GM12878 (cell line): ENCODE measurements at regions of chr9 and their contacts with region 1.

Region 1: DNA sequence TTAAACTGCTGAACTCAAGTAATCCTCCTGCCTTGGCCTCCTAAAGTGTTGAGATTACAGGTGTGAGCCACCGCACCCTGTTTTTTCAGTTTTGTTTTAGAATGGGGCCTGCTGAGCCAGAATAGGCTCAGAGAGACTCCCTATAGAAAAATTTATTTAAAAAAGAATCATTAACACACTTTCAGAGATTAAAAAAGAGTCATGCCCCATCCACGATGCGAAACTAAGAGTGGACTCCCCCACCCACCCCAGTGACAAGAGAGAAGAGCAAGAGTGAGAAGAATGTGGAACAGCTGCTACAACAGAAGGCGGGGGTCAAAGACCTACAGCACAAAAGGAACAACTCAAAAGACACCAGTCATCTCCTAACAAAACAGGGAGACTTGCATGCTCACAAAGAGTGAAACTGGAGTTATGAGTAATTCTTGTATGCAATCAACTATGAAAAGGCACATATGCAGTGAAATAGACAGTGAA is 47.2 kb downstream of the GLDC start:
- DNase-seq: peak; percentile 92
- ATAC-seq: peak; percentile 99
- H3K4me3 ChIP-seq: no peak overlapping the region
- H3K27ac ChIP-seq: peak overlapping the region; percentile 63
- H3K4me1 ChIP-seq: peaks cover 10% of the 10 kb centered on the region; the same call in 1 of the 2 replicates
- H3K27me3 ChIP-seq: no peaks in the 10 kb centered on the region
- CTCF ChIP-seq: no peak
- EP300 ChIP-seq: peak; percentile 69 to 92; a peak in 3 of 4 replicates
- POLR2A ChIP-seq: no peak
- RAD21 ChIP-seq: peak; percentile 14; the same call in 1 of the 2 replicates

Region 2: GRCh38 chr9:6575324-6576034 is 22.8 kb before region 1 on chr9:
- CTCF ChIA-PET with region 1: interaction called, 5 read pairs
- POLR2A ChIA-PET with region 1: interaction called, 5 read pairs
- RAD21 ChIA-PET with region 1: interaction called, 6 read pairs
- SMC1A ChIA-PET with region 1: interaction called, 18 read pairs
- in situ Hi-C with region 1: no loop called
- intact Hi-C with region 1: no loop called
- DNase-seq: peak; percentile 53
- ATAC-seq: peak; percentile 95
- H3K4me3 ChIP-seq: no peak overlapping the region
- H3K27ac ChIP-seq: peak overlapping the region; percentile 4; the same call in 1 of the 2 replicates
- H3K4me1 ChIP-seq: peaks cover 18% of the 10 kb centered on the region
- H3K27me3 ChIP-seq: no peaks in the 10 kb centered on the region
- CTCF ChIP-seq: no peak
- EP300 ChIP-seq: no peak
- POLR2A ChIP-seq: no peak
- RAD21 ChIP-seq: no peak

Region 3: DNA sequence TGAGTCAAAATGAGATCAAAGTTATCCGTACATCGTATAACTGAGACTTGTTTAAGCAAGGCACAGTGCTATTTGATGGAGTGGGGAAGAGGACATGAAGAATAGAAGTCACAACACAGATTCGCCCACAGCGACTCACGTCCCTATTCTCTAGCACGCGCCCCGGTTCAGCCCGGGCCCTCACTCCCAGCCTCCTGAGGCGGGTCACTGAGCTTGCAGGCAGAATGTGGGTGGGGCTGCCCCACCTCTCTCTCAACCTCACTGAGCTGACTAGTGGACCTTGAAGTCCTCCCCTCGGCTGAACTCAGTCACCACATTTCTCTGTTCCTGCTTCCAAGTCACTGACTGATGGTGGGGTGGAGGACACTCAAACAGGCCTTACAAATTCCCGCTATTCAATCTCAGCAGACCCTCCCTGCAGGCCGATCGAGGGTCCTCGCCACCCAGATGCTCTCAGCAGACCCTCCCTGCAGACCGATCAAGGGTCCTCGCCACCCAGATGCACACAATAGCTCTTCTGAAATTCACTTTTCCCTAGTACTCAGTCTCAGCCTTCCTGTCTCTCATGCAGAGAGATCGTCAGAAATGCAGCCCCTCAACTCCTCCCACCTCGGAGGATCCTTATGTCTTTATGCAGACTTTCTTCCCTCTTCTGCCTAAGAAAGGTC is 34.4 kb after region 1 on chr9:
- CTCF ChIA-PET with region 1: interaction called, 4 read pairs
- POLR2A ChIA-PET with region 1: interaction called, 18 read pairs
- RAD21 ChIA-PET with region 1: interaction called, 6 read pairs
- SMC1A ChIA-PET with region 1: interaction called, 12 read pairs
- in situ Hi-C with region 1: no loop called
- intact Hi-C with region 1: loop called (anchors 2 kb)
- DNase-seq: peak; percentile 87
- ATAC-seq: peak; percentile 96
- H3K4me3 ChIP-seq: peak overlapping the region; percentile 38; the same call in 1 of the 2 replicates
- H3K27ac ChIP-seq: peak overlapping the region; percentile 59
- H3K4me1 ChIP-seq: peaks cover 32% of the 10 kb centered on the region
- H3K27me3 ChIP-seq: no peaks in the 10 kb centered on the region
- CTCF ChIP-seq: no peak
- EP300 ChIP-seq: peak in 1 of 2 experiments; percentile 66; a peak in 2 of 4 replicates
- POLR2A ChIP-seq: peak; percentile 50
- RAD21 ChIP-seq: no peak

Region 4: GRCh38 chr9:6655036-6655435 is 56.7 kb after region 1 on chr9:
- CTCF ChIA-PET with region 1: interaction called, 6 read pairs
- POLR2A ChIA-PET with region 1: interaction called, 3 read pairs
- RAD21 ChIA-PET with region 1: interaction called, 11 read pairs
- SMC1A ChIA-PET with region 1: interaction called, 9 read pairs
- in situ Hi-C with region 1: no loop called
- intact Hi-C with region 1: no loop called
- DNase-seq: peak; percentile 84
- ATAC-seq: peak; percentile 91
- H3K4me3 ChIP-seq: peak overlapping the region; percentile 21; the same call in 1 of the 2 replicates
- H3K27ac ChIP-seq: peak overlapping the region; percentile 49
- H3K4me1 ChIP-seq: peaks cover 29% of the 10 kb centered on the region
- H3K27me3 ChIP-seq: no peaks in the 10 kb centered on the region
- CTCF ChIP-seq: no peak
- EP300 ChIP-seq: peak; percentile 68 to 77; a peak in 3 of 4 replicates
- POLR2A ChIP-seq: no peak
- RAD21 ChIP-seq: 0 out of 2 replicates have a peak, but pooled peaks have one; percentile 8

Region 5: DNA sequence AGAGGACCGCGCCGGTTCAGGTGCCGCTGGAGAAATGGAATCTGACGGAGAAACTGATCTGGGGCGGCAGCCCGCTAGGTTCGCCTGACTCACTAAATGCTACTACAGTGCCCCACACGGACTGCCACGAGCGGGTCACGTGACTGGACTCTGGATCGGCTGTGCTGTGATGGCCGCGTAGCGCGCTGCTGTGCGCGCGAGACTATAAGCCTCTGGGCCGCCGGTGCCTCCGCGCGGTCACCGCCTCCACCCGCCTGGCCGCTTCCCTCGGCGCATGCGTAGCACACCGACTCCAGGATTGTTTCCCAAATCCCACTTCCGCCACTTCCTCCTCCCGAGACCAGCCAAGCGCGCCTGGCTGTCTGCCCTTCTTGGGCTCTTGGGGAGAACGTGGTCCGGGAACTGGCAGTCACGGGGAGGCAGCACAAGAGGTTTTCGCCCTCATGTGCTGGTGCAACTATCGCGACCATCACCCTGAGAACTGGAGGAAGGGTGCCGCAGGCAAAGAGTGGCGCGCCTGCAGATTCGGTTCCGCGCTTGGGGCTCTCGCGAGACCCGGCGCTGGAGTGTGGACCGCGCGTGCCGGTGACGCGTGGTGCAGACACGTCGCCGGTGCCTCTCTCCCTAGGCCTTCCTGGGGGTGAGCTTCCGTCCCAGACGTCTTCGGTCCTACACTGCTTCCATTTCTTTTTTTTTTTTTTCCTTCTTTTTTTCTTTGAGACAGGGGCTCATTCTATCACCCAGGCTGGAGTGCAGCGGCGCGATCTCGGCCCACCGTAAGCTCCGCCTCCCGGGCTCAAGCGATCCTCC is 83.1 kb after region 1 on chr9:
- CTCF ChIA-PET with region 1: interaction called, 3 read pairs
- POLR2A ChIA-PET with region 1: interaction called, 5 read pairs
- RAD21 ChIA-PET with region 1: interaction called, 8 read pairs
- SMC1A ChIA-PET with region 1: interaction called, 16 read pairs
- in situ Hi-C with region 1: no loop called
- intact Hi-C with region 1: loop called (anchors 5 kb)
- DNase-seq: peak; percentile 88
- ATAC-seq: peak; percentile 84
- H3K4me3 ChIP-seq: peak overlapping the region; percentile 88
- H3K27ac ChIP-seq: peak overlapping the region; percentile 99
- H3K4me1 ChIP-seq: peaks cover 20% of the 10 kb centered on the region
- H3K27me3 ChIP-seq: no peaks in the 10 kb centered on the region
- CTCF ChIP-seq: no peak
- EP300 ChIP-seq: peak in 1 of 2 experiments; percentile 20; a peak in 1 of 4 replicates
- POLR2A ChIP-seq: peak; percentile 91
- RAD21 ChIP-seq: no peak

Region 6: DNA sequence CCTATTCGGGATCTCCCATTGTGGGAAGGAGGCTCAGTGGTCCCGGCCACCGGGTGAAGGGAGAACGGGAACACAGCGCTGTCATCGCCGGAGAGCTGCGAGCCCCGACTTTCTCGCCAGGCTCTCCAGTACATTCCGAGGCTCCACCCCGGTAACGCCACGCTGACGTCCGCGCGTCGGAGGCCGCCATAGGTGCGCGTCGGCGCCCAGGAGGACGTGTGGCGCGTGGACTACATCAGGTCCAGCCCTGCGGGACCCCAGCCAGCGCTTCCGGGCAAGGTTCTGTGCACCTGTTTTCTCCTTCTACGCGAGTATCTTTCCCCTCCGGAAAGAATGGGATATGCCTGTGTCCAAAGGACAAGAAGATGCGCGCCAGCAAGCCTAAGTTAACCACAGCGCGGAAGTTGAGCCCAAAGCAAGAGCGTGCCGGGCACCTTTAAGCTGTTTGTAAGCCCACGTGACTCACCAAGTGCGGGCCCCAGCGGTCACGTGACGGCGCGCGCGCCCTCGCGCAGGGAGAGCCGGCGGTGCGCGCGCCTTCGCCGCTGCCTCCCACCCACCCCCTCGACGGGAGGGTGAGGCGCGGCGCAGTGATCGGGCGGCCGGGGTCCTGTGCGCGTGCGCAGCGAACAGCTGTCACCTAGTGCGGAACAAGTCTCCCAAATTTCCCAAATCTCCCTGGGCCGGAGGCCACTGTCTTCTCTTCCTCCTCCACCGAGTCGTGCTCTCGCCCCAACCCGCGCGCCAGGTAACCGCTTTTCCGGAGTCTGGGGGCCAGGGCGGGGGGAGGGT is 159.4 kb after region 1 on chr9 and contains the start of gene KDM4C:
- CTCF ChIA-PET with region 1: no interaction called
- POLR2A ChIA-PET with region 1: interaction called, 3 read pairs
- RAD21 ChIA-PET with region 1: no interaction called
- SMC1A ChIA-PET with region 1: no interaction called
- in situ Hi-C with region 1: no loop called
- intact Hi-C with region 1: loop called (anchors 5 kb)
- DNase-seq: peak; percentile 88
- ATAC-seq: peak; percentile 89
- H3K4me3 ChIP-seq: peak within 1 kb of the TSS; percentile 76
- H3K27ac ChIP-seq: peak within 1 kb of the TSS; percentile 96
- H3K4me1 ChIP-seq: peaks cover 6% of the 10 kb centered on the region
- H3K27me3 ChIP-seq: no peaks in the 10 kb centered on the region
- CTCF ChIP-seq: no peak
- EP300 ChIP-seq: peak in 1 of 2 experiments; percentile 54; a peak in 2 of 4 replicates
- POLR2A ChIP-seq: peak; percentile 95
- RAD21 ChIP-seq: no peak
- polyA plus RNA-seq, gene KDM4C: 6.8 to 11.7 TPM